ENCODE measurements at regions of chr5 and their contacts with region 1.

Region 1: DNA sequence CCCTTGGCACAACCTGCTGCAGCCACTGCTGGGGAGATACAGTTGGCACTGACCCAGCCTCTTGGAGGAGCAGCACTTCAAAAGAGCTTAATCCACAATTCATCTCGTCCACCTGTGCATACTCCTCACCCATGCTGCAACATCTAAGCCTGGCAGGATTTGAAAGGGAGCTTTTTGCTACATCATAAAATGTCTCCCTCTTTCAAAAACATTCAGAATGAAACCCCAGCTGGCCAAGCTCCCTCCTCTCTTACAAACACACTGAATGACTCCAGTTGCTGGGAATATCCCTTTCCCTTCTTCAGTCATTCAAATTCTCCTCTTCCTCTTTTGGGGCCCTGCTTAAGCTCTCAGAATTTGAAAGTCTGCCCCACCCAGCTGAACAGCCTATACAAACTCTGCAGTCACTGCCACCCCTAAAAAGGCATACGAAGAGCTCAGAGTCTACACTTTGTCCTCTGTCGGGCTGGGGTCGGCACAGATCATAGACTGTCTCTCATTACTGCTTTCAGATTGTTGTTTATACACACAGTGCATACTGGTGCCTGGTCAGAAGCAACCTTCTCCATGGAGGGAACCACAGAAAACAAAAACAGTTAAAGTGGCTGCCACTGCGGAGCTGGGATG is 8.8 kb upstream of the C5orf15 start:
- DNase-seq: no peak
- H3K4me3 ChIP-seq: no peak overlapping the region
- H3K4me3 Mint-ChIP-seq: no peak overlapping the region
- H3K27ac ChIP-seq: no peak overlapping the region
- H3K27ac Mint-ChIP-seq: peak overlapping the region in 5 of 7 donors; percentile 27 to 81 (median 59)
- H3K4me1 ChIP-seq: no peaks in the 10 kb centered on the region
- H3K4me1 Mint-ChIP-seq: peaks cover 0 to 6% (median 4%) of the 10 kb centered on the region in 4 donors
- H3K27me3 ChIP-seq: no peaks in the 10 kb centered on the region
- H3K27me3 Mint-ChIP-seq: no peaks in the 10 kb centered on the region

Region 2: DNA sequence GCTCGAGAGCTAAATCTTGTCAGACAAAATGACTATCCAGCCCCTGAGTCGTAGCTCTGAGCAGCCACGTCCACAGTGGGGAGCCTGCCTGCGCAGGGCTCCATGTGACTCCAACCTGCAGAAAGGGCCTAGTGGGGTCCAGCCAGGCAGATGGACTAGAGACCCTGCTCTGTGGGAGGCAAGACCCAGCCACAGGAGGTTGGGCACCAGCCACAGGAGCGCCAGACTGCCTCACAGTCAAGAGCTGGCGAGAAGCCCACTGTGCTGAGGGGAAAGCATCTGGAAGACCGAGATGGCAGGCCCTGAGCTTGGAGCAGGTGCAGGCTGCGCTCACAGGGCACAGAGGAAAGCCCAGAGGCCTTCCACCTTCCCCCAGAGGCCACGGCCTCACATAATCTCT is 70.2 kb before region 1 on chr5:
- CTCF ChIA-PET with region 1: no interaction called
- POLR2A ChIA-PET with region 1: no interaction called
- intact Hi-C with region 1: no loop called
- DNase-seq: no peak
- H3K4me3 ChIP-seq: no peak overlapping the region
- H3K4me3 Mint-ChIP-seq: no peak overlapping the region
- H3K27ac ChIP-seq: no peak overlapping the region
- H3K27ac Mint-ChIP-seq: no peak overlapping the region
- H3K4me1 ChIP-seq: no peaks in the 10 kb centered on the region
- H3K4me1 Mint-ChIP-seq: no peaks in the 10 kb centered on the region
- H3K27me3 ChIP-seq: no peaks in the 10 kb centered on the region
- H3K27me3 Mint-ChIP-seq: no peaks in the 10 kb centered on the region

Region 3: GRCh38 chr5:133962801-133963476 is 14.3 kb before region 1 on chr5:
- CTCF ChIA-PET with region 1: interaction called, 12 read pairs
- POLR2A ChIA-PET with region 1: interaction called, 3 read pairs
- intact Hi-C with region 1: no loop called
- DNase-seq: no peak
- H3K4me3 ChIP-seq: no peak overlapping the region
- H3K4me3 Mint-ChIP-seq: peak overlapping the region in 2 of 8 donors; percentile 16 to 48
- H3K27ac ChIP-seq: no peak overlapping the region
- H3K27ac Mint-ChIP-seq: peak overlapping the region in 5 of 7 donors; percentile 23 to 83 (median 62)
- H3K4me1 ChIP-seq: peaks cover 28% of the 10 kb centered on the region
- H3K4me1 Mint-ChIP-seq: peaks cover 38 to 54% (median 47%) of the 10 kb centered on the region in 4 donors
- H3K27me3 ChIP-seq: no peaks in the 10 kb centered on the region
- H3K27me3 Mint-ChIP-seq: no peaks in the 10 kb centered on the region

Region 4: DNA sequence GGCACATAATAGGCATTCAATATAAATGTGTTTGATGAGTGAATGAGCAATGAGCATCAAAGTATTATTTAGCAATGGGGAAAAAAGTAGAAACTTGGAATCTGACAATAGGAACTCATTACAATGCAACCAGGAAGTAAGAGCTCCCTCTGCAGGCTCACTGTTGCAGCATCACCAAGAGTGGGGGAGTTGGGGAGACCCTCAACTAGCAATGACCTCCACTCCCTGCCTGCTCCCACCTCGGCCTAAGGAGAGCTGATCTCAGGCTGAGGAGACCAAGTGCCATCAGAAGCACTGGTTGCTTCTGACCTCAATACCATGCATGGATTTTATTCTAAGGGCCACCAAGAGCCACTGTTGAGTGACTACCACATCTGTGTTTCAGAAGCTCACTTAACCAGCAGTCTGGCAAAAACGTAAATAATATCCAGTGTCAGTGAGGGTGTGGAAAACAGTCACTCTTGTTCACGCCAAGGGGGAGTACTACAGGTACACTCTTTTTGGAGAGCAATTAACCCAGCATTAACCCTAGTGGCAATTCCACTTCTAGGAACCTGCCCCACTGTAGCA is 19.5 kb after region 1 on chr5:
- CTCF ChIA-PET with region 1: interaction called, 87 read pairs
- POLR2A ChIA-PET with region 1: no interaction called
- intact Hi-C with region 1: no loop called
- DNase-seq: peak in 2 of 5 donors; percentile 11 to 22
- H3K4me3 ChIP-seq: no peak overlapping the region
- H3K4me3 Mint-ChIP-seq: peak overlapping the region in 1 of 8 donors; percentile 49
- H3K27ac ChIP-seq: no peak overlapping the region
- H3K27ac Mint-ChIP-seq: no peak overlapping the region
- H3K4me1 ChIP-seq: peaks cover 56% of the 10 kb centered on the region
- H3K4me1 Mint-ChIP-seq: peaks cover 44 to 80% (median 63%) of the 10 kb centered on the region in 4 donors
- H3K27me3 ChIP-seq: no peaks in the 10 kb centered on the region
- H3K27me3 Mint-ChIP-seq: no peaks in the 10 kb centered on the region